HepG2 (cell line): ENCODE measurements at regions of chr1 and their contacts with region 1.

Region 1: DNA sequence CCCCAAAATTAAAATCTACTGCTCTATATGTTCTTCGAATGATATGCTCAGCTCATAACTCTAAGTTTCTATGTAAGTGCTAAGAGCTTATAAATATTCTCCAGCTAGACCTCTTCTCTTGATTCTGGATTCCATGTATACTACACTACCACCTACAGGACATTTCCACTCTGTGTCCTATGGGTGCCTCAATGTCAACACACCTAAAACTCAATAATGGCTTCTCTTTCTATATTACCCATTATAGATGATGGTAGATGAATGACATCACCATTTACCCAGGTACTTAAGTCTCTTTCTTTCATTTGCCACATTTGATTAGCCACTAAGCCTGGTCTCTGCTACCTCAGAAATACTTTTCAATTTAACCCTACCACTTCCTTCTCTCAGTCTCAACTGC is 41.3 kb downstream of the TBX19 start:
- DNase-seq: peak; percentile 31
- ATAC-seq: peak; percentile 90
- H3K4me3 ChIP-seq: no peak overlapping the region
- H3K27ac ChIP-seq: no peak overlapping the region
- H3K4me1 ChIP-seq: 0 out of 2 replicates have a peak, but pooled peaks cover 6% of the 10 kb centered on the region
- H3K27me3 ChIP-seq: no peaks in the 10 kb centered on the region
- CTCF ChIP-seq: peak; percentile 51
- EP300 ChIP-seq: no peak
- POLR2A ChIP-seq: no peak
- RAD21 ChIP-seq: no peak

Region 2: DNA sequence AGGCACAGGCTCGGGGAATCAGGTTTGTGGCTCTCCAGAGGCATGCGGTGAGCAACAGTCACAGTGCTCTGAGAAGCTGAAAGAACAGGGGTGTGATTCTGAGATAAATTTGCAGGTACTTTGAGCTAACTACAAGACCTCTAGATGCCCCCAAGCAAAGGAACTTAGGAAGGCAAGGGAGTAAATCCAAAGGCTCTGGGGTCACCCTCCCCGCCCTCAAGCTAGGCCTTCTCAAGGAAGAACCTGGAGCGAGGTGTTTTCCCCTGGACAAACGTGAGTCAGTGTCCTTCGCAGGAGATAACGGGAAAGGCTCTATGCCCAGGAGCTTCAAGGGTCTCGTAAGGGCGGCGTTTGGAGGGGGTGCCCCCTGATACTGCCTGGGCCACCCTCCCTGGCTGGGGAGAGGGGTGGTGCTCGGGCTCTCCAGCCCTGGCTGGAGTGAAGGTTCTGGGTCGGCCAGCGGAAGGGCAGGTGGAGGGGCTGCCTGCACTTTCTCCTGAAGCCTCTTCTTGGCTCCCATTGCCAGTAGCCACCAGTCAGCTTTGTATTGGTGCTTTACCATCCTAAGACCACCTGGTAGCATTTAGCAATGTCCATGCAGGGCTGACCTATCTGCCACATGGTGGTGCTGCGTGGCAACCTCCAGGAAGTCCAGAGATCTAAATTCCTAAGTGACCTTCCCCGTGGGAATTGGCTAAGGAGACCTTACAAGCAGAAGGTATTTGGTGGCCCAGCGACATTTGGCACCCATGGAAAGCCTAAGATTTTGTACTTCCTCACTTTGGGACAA is 229.2 kb before region 1 on chr1:
- CTCF ChIA-PET with region 1: interaction called, 3 read pairs
- POLR2A ChIA-PET with region 1: no interaction called
- in situ Hi-C with region 1: loop called (anchors 5 kb)
- intact Hi-C with region 1: loop called (anchors 2 kb)
- DNase-seq: peak; percentile 46
- ATAC-seq: peak; percentile 82
- H3K4me3 ChIP-seq: no peak overlapping the region
- H3K27ac ChIP-seq: no peak overlapping the region
- H3K4me1 ChIP-seq: no peaks in the 10 kb centered on the region
- H3K27me3 ChIP-seq: 0 out of 5 replicates have a peak, but pooled peaks cover 2 to 4% of the 10 kb centered on the region in 2 experiments
- CTCF ChIP-seq: peak; percentile 82
- EP300 ChIP-seq: no peak
- POLR2A ChIP-seq: no peak
- RAD21 ChIP-seq: peak; percentile 58; the same call in 1 of the 2 replicates

Region 3: DNA sequence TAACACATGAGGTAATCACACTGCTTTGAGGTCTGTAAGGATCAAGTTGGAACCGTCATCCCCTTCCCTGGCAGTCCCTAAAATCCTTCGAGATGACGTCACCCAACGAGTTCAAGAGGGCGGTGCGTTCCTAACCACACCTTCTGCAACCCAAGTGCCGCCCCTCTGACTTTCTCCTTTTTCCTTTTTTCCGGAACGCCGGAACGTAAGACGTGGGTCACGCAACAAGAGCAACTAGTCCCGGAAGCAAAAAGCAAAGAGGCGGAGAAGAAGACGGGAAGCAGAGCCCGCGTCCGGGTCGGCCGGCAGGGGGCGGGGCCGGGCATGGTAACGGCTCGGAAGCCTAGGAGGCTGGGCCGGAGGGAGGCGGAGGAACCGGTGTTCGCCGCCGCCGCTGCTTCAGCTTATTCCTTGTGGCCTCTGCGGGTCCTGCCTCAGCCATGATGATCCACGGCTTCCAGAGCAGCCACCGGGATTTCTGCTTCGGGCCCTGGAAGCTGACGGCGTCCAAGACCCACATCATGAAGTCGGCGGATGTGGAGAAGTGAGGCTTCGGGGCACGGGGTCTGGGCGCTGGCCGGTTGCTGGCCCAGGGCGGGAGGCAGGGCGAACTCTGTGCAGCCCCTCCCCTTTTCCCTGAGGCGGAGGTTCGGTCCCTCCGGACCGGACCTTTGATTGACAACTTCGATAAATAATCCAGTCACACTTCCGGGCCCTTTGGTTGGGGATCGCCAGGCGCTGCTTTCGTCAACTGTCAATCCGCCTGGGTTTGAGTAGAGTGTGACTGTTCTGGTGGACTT is 143.1 kb before region 1 on chr1 and contains the start of gene TIPRL:
- CTCF ChIA-PET with region 1: no interaction called
- POLR2A ChIA-PET with region 1: no interaction called
- in situ Hi-C with region 1: no loop called
- intact Hi-C with region 1: loop called (anchors 1 kb)
- DNase-seq: peak; percentile 95
- ATAC-seq: peak; percentile 96
- H3K4me3 ChIP-seq: peak within 1 kb of the TSS; percentile 76 to 85 (median 83)
- H3K27ac ChIP-seq: peak within 1 kb of the TSS; percentile 68
- H3K4me1 ChIP-seq: peaks cover 11% of the 10 kb centered on the region
- H3K27me3 ChIP-seq: no peaks in the 10 kb centered on the region; a peak in 1 of 5 replicates
- CTCF ChIP-seq: peak; percentile 83
- EP300 ChIP-seq: no peak
- POLR2A ChIP-seq: peak; percentile 67 to 70
- RAD21 ChIP-seq: peak; percentile 74
- total RNA-seq, gene TIPRL: 22.8 and 33.5 TPM in 2 replicates

Region 4: DNA sequence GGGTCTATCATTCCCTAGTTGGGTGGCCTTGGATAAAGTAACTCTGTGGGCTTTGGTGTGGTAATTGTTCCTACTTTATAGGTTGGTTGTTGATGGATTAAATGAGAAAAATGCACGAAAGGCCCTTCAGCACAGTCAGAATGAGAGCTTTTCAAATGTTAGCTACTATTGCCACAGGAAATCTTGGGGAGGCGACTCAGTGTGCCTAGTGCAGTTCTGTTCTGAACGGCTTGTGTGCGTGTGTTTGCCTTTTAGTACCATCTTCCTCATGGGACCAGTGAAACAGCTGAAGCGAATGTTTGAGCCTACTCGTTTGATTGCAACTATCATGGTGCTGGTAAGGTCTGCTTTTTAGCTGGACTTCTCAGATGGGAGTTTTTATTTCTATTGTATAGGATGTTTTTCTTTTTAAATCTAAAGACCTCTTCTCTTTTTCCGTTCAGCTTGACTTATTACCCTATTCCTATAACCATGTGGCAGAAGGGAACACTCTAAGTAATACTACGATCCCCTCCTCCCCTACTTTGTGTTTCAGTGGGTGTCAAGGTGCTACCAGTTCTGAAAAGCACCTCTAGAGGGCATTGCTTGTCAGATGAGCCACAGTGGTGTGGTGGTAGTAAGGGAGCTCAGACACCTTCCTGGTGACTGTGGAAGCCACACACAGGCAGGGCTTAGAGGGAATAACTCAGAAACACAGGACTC is 86.9 kb before region 1 on chr1:
- CTCF ChIA-PET with region 1: no interaction called
- POLR2A ChIA-PET with region 1: no interaction called
- in situ Hi-C with region 1: no loop called
- intact Hi-C with region 1: loop called (anchors 10 kb)
- DNase-seq: peak; percentile 56
- ATAC-seq: peak; percentile 98
- H3K4me3 ChIP-seq: no peak overlapping the region
- H3K27ac ChIP-seq: no peak overlapping the region
- H3K4me1 ChIP-seq: peaks cover 33% of the 10 kb centered on the region
- H3K27me3 ChIP-seq: no peaks in the 10 kb centered on the region
- CTCF ChIP-seq: peak; percentile 75
- EP300 ChIP-seq: no peak
- POLR2A ChIP-seq: no peak
- RAD21 ChIP-seq: no peak

Region 5: DNA sequence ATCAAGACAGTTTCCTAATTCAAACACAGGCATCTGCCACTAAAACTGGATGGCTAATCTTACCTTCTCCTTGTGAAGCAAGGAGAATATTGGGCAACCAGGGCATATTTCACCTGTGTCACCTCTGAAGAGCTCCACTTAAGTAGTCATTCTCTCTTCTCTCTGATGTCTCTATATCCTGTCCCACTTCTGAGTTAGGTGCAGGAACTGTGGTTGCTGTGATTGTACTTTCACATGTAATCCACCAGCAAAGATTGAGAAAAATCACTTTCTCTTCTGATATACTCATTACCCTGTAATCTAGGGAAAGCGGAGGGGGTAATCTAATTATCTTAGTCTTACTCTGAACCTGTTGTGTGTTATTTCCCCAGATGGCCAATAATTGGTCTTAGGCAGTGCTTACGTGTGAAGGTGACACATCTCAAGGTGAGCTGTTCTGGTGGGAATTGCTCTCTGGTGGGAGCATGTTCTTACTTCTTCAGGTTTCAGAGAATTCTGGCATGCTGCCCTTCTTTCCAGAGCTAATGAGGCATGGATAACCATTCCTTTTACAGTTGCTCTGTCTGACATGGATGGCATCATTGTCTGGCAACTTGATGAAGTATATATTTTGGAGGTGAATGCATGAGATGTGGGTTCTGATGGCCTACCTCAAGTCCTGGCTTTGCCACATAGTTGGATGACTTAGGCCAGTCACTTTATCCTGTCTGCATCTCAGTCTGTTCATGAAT is 209.8 kb after region 1 on chr1:
- CTCF ChIA-PET with region 1: no interaction called
- POLR2A ChIA-PET with region 1: no interaction called
- in situ Hi-C with region 1: no loop called
- intact Hi-C with region 1: no loop called
- DNase-seq: no peak
- ATAC-seq: no peak
- H3K4me3 ChIP-seq: no peak overlapping the region
- H3K27ac ChIP-seq: no peak overlapping the region
- H3K4me1 ChIP-seq: no peaks in the 10 kb centered on the region
- H3K27me3 ChIP-seq: no peaks in the 10 kb centered on the region
- CTCF ChIP-seq: no peak
- EP300 ChIP-seq: no peak
- POLR2A ChIP-seq: no peak
- RAD21 ChIP-seq: no peak